PC-9 (cell line): ENCODE measurements at regions of chr7 and their contacts with region 1.

Region 1: DNA sequence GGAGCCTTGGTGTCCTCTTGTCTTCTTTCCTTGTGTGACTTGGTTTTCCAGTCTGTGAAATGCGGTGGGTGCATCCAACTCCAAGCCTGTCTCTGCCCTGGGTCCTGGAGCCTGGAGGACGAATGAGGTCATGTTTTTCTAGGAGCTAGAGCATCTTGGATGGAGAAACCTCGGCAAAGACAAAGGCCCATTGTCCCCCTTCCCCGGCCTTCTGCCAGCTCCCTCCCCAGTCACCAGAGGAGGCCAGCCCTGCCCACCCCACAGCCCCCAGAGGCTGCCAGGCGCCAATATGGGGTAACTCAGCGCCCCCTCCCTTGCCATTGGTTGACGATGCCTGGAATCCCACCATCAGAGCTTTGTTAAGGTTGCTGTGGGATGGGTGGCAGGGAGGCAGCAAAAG is 40.4 kb downstream of the KCTD7 start:
- DNase-seq: no peak
- H3K4me3 ChIP-seq: no peak overlapping the region
- H3K27ac ChIP-seq: no peak overlapping the region
- H3K4me1 ChIP-seq: peaks cover 3% of the 10 kb centered on the region
- H3K27me3 ChIP-seq: no peaks in the 10 kb centered on the region
- CTCF ChIP-seq: no peak

Region 2: DNA sequence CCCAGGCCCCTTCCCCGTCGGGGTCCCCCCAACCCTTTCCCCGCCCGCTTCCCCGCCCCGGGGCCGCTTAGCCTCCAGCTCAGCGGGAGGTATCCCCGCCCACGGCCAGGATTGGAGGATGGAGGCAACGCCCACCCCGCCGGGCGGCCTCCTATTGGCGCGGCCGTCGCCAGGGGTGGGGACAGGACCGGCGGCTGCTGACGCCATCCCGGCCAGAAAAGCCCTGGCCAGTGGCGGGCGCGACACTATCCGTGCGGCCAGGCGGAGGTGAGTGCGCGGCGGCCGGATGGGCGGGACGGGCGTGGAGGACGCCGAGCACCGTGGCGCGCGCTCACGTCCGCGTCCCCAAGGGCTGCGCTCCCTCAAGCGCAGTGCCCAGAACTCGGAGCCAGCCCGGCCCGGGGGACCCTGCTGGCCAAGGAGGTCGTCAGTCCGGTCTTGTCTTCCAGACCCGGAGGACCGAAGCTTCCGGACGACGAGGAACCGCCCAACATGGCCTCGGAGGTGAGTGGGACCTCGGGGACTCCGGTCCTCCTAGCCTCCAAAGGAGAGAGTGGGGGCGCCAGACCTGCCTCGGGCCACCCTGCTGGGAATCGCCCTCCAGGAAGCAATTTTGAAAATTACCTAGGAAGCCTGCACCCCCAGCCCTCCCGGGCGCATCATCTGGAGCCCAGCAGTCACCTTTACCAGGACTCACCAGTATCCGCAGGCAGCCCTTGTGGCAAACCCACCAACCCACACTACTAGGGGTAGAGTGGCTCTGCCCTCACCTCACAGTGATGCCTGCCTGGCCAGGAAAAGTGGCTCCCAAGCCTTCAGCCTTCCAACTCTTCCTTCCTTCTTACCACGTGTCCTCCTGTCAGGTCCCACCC is 593.3 kb before region 1 on chr7 and contains the start of gene ASL:
- CTCF ChIA-PET with region 1: no interaction called
- POLR2A ChIA-PET with region 1: interaction called, 10 read pairs
- intact Hi-C with region 1: no loop called
- DNase-seq: peak; percentile 80 to 96
- H3K4me3 ChIP-seq: peak within 1 kb of the TSS; percentile 84
- H3K27ac ChIP-seq: no peak within 1 kb of the TSS
- H3K4me1 ChIP-seq: peaks cover 9% of the 10 kb centered on the region
- H3K27me3 ChIP-seq: no peaks in the 10 kb centered on the region
- CTCF ChIP-seq: no peak
- total RNA-seq, gene ASL: 19.0 and 30.5 TPM in 2 replicates

Region 3: DNA sequence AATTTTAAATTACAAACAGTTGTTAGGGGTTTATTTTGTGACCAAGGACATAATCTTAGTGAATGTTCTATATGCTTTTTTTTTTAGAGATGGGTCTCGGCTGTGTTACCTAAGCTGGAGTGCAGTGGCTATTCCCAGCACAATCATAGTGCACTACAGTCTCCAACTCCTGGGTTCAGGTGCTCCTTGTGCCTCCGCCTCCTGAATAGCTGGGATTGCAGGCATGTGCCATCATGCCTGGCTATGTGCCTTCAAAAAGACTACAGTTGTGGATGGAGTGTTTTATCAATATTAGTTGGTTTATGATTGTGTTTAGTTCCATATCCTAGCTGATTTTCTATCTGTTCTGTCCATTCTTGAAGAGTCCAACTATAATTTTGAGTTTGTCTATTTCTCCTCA is 46.6 kb after region 1 on chr7:
- CTCF ChIA-PET with region 1: no interaction called
- POLR2A ChIA-PET with region 1: no interaction called
- intact Hi-C with region 1: no loop called
- DNase-seq: no peak
- H3K4me3 ChIP-seq: no peak overlapping the region
- H3K27ac ChIP-seq: no peak overlapping the region
- H3K4me1 ChIP-seq: no peaks in the 10 kb centered on the region
- H3K27me3 ChIP-seq: no peaks in the 10 kb centered on the region
- CTCF ChIP-seq: no peak